ENCODE measurements at regions of chr4 and their contacts with region 1.

Region 1: GRCh38 chr4:111283061-111283677 is 660.3 kb upstream of the PITX2 start:
- DNase-seq: no peak
- H3K4me3 ChIP-seq: no peak overlapping the region
- CTCF ChIP-seq: peak; percentile 80

Region 2: GRCh38 chr4:110959041-110959643 is 324.0 kb before region 1 on chr4:
- CTCF ChIA-PET with region 1: interaction called, 11 read pairs
- POLR2A ChIA-PET with region 1: no interaction called
- DNase-seq: no peak
- H3K4me3 ChIP-seq: no peak overlapping the region
- CTCF ChIP-seq: peak; percentile 14

Region 3: GRCh38 chr4:111187103-111187502 is 96.1 kb before region 1 on chr4:
- CTCF ChIA-PET with region 1: no interaction called
- POLR2A ChIA-PET with region 1: no interaction called
- DNase-seq: no peak
- H3K4me3 ChIP-seq: no peak overlapping the region
- CTCF ChIP-seq: no peak

Region 4: DNA sequence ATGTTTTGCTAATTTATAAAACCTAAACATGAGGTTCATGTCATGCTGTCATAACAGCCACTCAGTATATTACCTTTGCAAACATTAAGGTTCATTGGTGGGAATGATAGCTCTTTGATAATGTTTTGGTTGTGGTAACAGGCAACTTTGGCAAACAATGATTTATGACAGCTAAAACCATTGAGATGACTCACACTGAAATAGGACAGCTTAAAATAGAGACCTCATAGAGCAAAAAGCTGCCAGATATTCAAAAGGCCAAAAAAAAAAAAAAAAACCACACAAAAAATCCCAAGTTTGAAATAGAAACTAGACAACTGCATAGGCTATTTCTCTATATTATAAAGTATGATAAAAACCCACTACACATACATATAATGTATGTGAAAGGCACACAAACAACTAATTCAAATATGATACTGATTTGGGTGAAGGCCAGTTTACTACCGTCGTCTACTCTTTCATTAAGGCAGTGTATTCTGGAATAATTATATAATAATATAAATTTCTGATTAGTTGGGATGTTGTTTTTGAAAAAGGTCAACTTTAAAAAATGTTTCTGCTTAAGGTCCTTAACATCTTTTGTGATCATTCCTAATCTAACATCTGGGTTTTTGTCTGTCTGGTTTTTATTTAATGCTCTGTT is 14.3 kb before region 1 on chr4:
- CTCF ChIA-PET with region 1: interaction called, 15 read pairs
- POLR2A ChIA-PET with region 1: no interaction called
- DNase-seq: no peak
- H3K4me3 ChIP-seq: no peak overlapping the region
- CTCF ChIP-seq: no peak

Region 5: GRCh38 chr4:111296466-111296865 is 13.3 kb after region 1 on chr4:
- CTCF ChIA-PET with region 1: interaction called, 21 read pairs
- POLR2A ChIA-PET with region 1: no interaction called
- DNase-seq: no peak
- H3K4me3 ChIP-seq: no peak overlapping the region
- CTCF ChIP-seq: no peak

Measured in AG04449 (cell line).